Activated CD8-positive, alpha-beta T cell treated with anti-CD3 and anti-CD28 coated beads, Interleukin-2, amount 10 ng/mL, durations not matched to agents 7 days and 5 days (primary cell): ENCODE measurements at regions of chr1 and their contacts with region 1.

Region 1: DNA sequence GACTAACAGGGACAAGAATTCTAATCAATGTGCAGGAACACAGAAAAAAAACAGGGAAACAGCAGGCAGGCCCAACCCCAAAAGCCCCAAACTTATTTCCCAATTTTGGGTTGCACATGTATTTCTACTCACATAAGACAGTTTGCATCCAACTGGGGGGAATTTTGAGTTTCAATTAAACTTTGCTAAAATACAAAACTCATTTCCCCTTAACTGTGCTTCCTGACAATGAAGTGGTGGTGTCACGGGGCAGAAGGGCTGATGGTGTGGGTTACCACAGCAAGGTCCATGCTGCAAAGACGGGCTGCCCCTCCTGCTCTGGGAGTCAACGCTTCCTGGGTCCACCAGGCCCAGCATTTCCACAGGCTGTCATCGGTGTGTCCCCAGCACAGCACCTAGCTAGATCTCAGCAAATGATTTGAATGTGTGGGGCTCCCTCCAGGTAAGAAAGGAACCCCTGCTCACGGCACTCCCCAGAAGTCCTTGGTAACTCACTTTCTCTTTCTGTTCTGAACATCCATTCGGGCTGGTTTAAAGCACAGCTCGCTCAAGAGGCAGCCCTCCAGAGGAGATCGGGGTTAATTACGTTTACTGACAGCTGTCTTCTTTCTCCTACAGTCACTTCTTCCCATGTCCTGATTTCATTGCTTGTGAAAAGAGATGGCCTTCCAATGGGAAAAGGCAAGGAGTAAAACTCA is 27.4 kb downstream of the HIVEP3 start:
- DNase-seq: peak; percentile 81
- ATAC-seq: peak; percentile 96
- H3K4me3 Mint-ChIP-seq: peak overlapping the region; percentile 79
- H3K27ac Mint-ChIP-seq: peak overlapping the region; percentile 91
- H3K4me1 Mint-ChIP-seq: peaks cover 68% of the 10 kb centered on the region
- H3K27me3 Mint-ChIP-seq: no peaks in the 10 kb centered on the region

Region 2: DNA sequence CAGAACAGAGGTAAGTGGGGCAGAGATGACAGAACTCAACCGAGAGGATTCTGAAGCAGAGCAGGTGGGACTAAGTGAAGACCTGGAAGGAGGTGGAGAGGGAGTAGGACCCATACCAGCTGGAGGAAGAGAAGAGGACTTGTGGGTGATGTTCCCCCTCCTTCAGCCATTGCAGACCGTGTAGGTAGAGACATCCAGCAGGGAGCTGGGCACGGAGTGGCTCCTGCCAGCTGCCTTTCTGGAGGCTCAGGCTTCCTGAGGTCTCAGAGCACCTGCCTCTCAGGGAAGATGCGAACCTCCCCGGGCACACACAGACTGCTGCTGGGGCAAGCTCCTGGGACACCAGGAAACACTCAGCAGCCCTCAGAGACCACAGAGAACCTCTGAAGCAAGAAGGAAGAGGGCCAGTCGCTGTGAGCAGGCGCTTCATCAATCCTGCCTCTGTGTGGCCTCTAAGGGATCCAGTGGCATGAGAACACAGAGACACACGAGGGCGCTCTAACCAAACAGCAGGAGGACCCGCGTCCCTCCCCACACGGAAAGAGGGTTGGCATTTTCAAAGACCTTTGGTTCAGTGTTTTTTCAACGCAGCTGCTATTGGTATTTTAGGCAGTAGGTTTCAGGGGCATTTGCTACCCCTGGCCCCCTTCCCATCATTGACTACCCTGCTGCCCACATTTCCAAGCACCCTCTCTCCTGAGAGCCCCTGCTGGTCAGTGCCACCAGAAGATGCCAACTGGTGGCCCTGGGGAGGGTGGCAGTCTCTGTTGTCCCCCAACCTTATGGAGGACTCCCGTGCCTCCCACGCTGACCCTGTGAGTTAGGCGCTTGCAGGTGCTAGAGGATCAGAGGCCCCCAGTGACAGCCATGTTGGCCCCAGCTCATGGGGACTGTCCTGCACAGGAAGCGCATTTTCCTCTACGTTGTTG is 317.3 kb before region 1 on chr1:
- CTCF ChIA-PET with region 1: interaction called, 32 read pairs
- POLR2A ChIA-PET with region 1: no interaction called
- DNase-seq: peak; percentile 93
- ATAC-seq: peak; percentile 99
- H3K4me3 Mint-ChIP-seq: no peak overlapping the region
- H3K27ac Mint-ChIP-seq: no peak overlapping the region
- H3K4me1 Mint-ChIP-seq: peaks cover 26% of the 10 kb centered on the region
- H3K27me3 Mint-ChIP-seq: no peaks in the 10 kb centered on the region

Region 3: DNA sequence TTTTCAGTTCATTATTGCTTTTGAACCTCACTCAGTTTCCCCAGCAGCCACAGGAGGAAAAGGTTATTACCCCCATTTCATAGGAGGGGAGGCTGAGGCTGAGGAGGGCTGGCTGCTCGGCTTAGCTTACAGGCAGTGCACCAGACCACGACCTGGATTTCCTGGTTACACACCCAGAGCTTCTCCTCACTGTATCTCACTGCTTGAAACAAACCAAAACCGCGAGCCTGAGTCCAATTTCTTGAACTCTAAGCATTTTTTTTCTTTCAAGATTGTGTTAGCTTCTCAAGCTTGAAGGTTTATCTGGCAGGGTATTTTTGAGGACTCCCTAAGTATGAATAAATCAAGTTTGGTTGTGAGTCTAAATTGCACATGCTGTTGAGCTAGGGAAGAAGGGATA is 218.0 kb before region 1 on chr1:
- CTCF ChIA-PET with region 1: interaction called, 12 read pairs
- POLR2A ChIA-PET with region 1: no interaction called
- DNase-seq: peak; percentile 81
- ATAC-seq: peak; percentile 95
- H3K4me3 Mint-ChIP-seq: peak overlapping the region; percentile 72
- H3K27ac Mint-ChIP-seq: peak overlapping the region; percentile 90
- H3K4me1 Mint-ChIP-seq: peaks cover 92% of the 10 kb centered on the region
- H3K27me3 Mint-ChIP-seq: no peaks in the 10 kb centered on the region

Region 4: GRCh38 chr1:41902125-41902524 is 10.8 kb after region 1 on chr1:
- CTCF ChIA-PET with region 1: interaction called, 10 read pairs
- POLR2A ChIA-PET with region 1: interaction called, 12 read pairs
- DNase-seq: no peak
- ATAC-seq: no peak
- H3K4me3 Mint-ChIP-seq: no peak overlapping the region
- H3K27ac Mint-ChIP-seq: peak overlapping the region; percentile 69
- H3K4me1 Mint-ChIP-seq: peaks cover 69% of the 10 kb centered on the region
- H3K27me3 Mint-ChIP-seq: no peaks in the 10 kb centered on the region

Region 5: GRCh38 chr1:41925712-41926111 is 34.4 kb after region 1 on chr1:
- CTCF ChIA-PET with region 1: interaction called, 10 read pairs
- POLR2A ChIA-PET with region 1: interaction called, 26 read pairs
- DNase-seq: no peak
- ATAC-seq: no peak
- H3K4me3 Mint-ChIP-seq: no peak overlapping the region
- H3K27ac Mint-ChIP-seq: no peak overlapping the region
- H3K4me1 Mint-ChIP-seq: peaks cover 3% of the 10 kb centered on the region
- H3K27me3 Mint-ChIP-seq: peaks cover 19% of the 10 kb centered on the region

Region 6: GRCh38 chr1:42173155-42173933 is 282.0 kb after region 1 on chr1:
- CTCF ChIA-PET with region 1: interaction called, 10 read pairs
- POLR2A ChIA-PET with region 1: no interaction called
- DNase-seq: peak; percentile 71
- ATAC-seq: peak; percentile 68
- H3K4me3 Mint-ChIP-seq: no peak overlapping the region
- H3K27ac Mint-ChIP-seq: no peak overlapping the region
- H3K4me1 Mint-ChIP-seq: no peaks in the 10 kb centered on the region
- H3K27me3 Mint-ChIP-seq: no peaks in the 10 kb centered on the region